OCI-LY7 (cell line): ENCODE measurements at regions of chr6 and their contacts with region 1.

Region 1: GRCh38 chr6:68701159-68701558 is 66.1 kb downstream of the ADGRB3 start:
- DNase-seq: no peak
- H3K4me3 ChIP-seq: no peak overlapping the region
- H3K27ac ChIP-seq: no peak overlapping the region
- H3K4me1 ChIP-seq: no peaks in the 10 kb centered on the region
- CTCF ChIP-seq: no peak

Region 2: GRCh38 chr6:70629929-70630328 is 1928.8 kb after region 1 on chr6:
- CTCF ChIA-PET with region 1: no interaction called
- POLR2A ChIA-PET with region 1: interaction called, 11 read pairs
- intact Hi-C with region 1: no loop called
- DNase-seq: no peak
- H3K4me3 ChIP-seq: no peak overlapping the region
- H3K27ac ChIP-seq: no peak overlapping the region
- H3K4me1 ChIP-seq: no peaks in the 10 kb centered on the region
- CTCF ChIP-seq: no peak